Colonic mucosa (tissue), 4 donors: ENCODE measurements at regions of chr5 and their contacts with region 1.

Region 1: GRCh38 chr5:180467989-180468740 is 26.0 kb upstream of the CNOT6 start:
- DNase-seq: no peak
- H3K4me3 ChIP-seq: no peak overlapping the region
- H3K27ac ChIP-seq: no peak overlapping the region
- H3K4me1 ChIP-seq: no peaks in the 10 kb centered on the region
- H3K27me3 ChIP-seq: no peaks in the 10 kb centered on the region
- CTCF ChIP-seq: no peak

Region 2: GRCh38 chr5:180294411-180294810 is 173.8 kb before region 1 on chr5:
- intact Hi-C with region 1: loop called (anchors 2 kb)
- DNase-seq: no peak
- H3K4me3 ChIP-seq: no peak overlapping the region
- H3K27ac ChIP-seq: no peak overlapping the region
- H3K4me1 ChIP-seq: peaks cover 12% of the 10 kb centered on the region
- H3K27me3 ChIP-seq: no peaks in the 10 kb centered on the region
- CTCF ChIP-seq: no peak